Endothelial cell of umbilical vein (primary cell): ENCODE measurements at regions of chr5 and their contacts with region 1.

Region 1: DNA sequence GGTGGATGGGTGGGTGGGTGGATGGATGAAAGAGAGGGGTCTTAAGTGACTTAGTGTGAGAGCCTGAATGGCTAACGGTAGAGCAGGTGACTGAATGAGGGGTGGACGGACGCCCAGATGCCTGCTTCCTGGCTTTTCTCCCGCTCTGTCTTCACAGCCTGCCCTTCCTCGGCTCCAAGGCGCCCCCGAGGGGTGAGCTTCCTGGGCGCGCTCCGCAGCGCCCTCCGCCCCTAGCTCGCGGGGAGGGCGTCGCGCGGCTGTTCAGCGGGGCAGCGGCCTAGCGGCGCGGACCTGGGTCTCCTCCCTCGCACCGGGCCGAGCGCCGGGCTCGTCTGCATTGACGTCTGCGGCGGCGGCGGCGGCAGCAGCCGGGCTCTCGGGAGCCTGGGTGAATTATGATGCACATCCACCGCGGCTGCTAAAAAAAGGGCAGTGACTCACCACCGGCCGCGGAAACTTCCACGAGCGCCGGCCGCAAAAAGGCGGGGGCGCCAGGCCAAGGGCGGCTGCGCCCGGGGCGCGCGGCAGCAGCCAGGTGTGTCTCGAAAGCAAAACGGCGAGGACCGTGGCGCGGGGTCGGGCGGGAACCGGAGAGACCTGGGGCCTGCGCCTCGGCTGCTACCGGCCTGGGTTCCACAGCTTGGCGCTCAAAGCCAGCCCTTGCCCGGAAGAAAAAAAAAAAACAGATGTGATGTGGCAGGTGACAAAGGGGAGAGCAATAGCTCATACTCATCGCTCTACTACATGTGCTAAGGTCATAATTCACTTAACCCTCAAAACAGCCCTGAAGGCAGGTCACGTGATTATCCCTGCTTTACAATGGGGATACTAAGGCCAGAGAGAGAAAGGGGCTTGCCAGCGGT is 143.0 kb upstream of the ADRA1B start:
- DNase-seq: peak; percentile 41
- H3K4me3 ChIP-seq: peak overlapping the region in 1 of 3 experiments; percentile 16
- H3K27ac ChIP-seq: no peak overlapping the region
- H3K4me1 ChIP-seq: no peaks in the 10 kb centered on the region
- H3K27me3 ChIP-seq: no peaks in the 10 kb centered on the region
- CTCF ChIP-seq: no peak
- POLR2A ChIP-seq: no peak

Region 2: GRCh38 chr5:158326256-158326655 is 1447.0 kb before region 1 on chr5:
- CTCF ChIA-PET with region 1: no interaction called
- POLR2A ChIA-PET with region 1: no interaction called
- dilution Hi-C with region 1: no loop called
- intact Hi-C with region 1: loop called (anchors 5 kb)
- DNase-seq: no peak
- H3K4me3 ChIP-seq: no peak overlapping the region
- H3K27ac ChIP-seq: no peak overlapping the region
- H3K4me1 ChIP-seq: no peaks in the 10 kb centered on the region
- H3K27me3 ChIP-seq: no peaks in the 10 kb centered on the region
- CTCF ChIP-seq: no peak
- POLR2A ChIP-seq: no peak